Activated naive CD4-positive, alpha-beta T cell treated with anti-CD3 and anti-CD28 coated beads, Interleukin-2, amount 10 ng/mL, durations not matched to agents 7 days and 5 days (primary cell): ENCODE measurements at regions of chr5 and their contacts with region 1.

Region 1: DNA sequence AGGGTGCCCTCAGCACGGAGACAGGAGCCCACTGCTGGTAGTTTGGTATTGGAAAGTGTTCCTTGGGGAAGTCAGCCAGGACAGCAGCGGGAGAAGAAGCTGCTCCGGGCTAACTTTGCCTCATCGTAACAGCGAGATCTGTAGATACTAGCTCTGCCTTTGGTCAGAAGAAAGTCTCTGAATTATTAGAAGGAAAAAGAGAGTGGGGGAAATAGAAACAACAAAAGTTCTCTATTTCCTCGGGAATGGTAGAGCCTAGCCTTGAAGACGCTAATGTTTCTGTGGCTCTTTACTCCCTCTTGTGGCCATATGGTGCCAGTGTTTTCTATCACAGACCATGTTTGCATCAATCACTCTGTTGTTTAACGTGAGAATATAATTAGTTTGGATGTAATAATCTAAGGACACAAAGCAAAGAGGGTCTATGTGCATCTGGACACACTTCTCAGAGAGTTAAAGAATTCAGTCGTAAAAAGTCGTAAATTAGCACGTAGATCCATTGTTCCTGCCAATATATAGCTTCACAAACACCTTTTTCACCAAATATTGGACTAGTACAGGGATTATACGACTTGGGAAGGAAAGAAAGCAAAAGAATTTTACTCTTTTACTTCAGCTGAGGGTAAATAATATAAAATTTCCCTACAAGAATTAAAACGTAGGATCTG is 40.2 kb upstream of the HSD17B4 start:
- DNase-seq: peak; percentile 65
- H3K4me3 Mint-ChIP-seq: peak overlapping the region; percentile 71
- H3K27ac Mint-ChIP-seq: peak overlapping the region; percentile 44
- H3K4me1 Mint-ChIP-seq: peaks cover 29% of the 10 kb centered on the region
- H3K27me3 Mint-ChIP-seq: no peaks in the 10 kb centered on the region

Region 2: DNA sequence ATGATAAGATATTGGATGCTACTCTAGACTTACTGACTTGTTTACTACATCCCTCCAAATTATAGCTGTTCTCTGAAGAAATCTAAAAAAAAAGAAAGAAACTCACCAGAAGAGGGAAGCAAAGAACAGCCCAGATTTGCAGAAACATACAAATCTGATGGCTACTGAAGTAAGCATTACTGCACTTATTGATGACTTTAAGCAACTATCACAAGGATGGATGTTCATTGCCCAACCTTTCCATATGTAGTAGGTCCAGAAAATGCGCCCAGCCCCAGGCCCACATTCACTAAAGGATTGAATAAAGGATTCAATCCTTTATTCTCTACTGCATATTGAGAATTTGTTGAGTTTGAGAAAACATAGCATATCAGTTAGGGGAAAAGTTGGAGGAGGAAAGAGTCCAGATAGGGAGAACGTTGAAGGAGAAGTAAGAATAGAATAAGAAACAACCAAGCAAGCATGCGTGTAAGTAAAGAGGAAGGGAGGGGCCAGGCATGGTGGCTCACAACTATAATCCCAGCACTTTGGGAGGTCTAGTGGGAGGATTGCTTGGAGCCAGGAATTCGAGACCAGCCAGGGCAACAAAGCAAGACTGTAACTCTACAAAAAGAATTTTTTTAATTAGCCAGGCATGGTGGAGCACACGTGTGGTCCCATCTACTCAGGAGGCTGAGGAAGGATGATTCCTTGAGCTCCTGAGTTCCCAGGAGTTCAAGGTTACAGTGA is 389.9 kb before region 1 on chr5:
- CTCF ChIA-PET with region 1: interaction called, 56 read pairs
- DNase-seq: no peak
- H3K4me3 Mint-ChIP-seq: no peak overlapping the region
- H3K27ac Mint-ChIP-seq: no peak overlapping the region
- H3K4me1 Mint-ChIP-seq: no peaks in the 10 kb centered on the region
- H3K27me3 Mint-ChIP-seq: no peaks in the 10 kb centered on the region

Region 3: DNA sequence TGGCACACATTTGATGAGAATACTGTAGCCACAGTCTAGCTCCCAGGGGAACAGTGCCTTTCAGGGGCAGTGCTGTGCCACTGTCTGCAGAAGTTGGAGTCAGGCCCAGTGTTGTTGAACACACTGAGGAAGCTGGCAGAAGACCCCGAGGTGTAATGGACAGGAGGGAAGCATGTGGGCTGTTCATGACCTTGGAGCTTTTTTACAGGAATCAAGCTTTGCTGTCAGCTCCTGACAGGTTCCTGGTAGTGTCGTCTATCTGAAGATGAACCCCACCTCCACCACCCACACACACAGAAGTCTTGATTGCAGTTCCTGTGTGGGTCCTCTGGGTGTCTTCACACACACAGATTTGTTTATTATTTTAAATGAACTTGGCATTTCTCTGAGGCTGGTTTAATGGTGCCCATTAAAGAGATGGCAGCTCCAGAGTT is 96.5 kb before region 1 on chr5:
- CTCF ChIA-PET with region 1: interaction called, 70 read pairs
- DNase-seq: peak; percentile 67
- H3K4me3 Mint-ChIP-seq: peak overlapping the region; percentile 26
- H3K27ac Mint-ChIP-seq: peak overlapping the region; percentile 84
- H3K4me1 Mint-ChIP-seq: peaks cover 97% of the 10 kb centered on the region
- H3K27me3 Mint-ChIP-seq: no peaks in the 10 kb centered on the region

Region 4: DNA sequence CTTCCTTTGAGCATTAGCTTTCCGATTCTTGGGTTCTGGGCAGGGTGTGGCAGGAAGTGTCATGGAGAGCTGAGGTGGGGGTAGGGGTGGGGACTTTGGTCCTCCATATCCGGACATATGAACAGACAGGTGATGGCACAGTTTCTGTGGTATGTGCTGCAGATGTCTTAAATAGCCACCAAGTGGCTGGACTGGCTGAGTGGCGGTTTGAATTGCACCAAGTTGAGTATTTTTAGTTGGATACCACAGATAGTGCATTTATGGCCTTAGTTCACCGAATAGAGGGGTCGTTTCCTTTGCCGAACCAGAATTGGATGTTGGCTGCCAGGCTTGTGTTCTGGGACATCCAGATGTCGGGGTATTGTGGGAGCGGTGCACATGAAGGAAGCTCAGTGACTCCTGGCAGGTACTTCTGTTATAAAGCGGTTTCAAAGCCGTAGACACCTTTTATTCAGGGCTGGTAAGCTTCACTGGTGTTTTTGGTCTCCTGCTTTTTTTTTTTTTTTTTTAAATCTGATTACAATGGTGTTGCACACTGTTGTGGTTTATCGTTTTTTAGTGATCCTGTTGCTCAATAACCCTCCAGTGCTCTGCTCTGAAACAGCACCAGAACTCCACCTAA is 71.4 kb before region 1 on chr5:
- CTCF ChIA-PET with region 1: interaction called, 44 read pairs
- DNase-seq: peak; percentile 84
- H3K4me3 Mint-ChIP-seq: peak overlapping the region; percentile 82
- H3K27ac Mint-ChIP-seq: peak overlapping the region; percentile 92
- H3K4me1 Mint-ChIP-seq: peaks cover 95% of the 10 kb centered on the region
- H3K27me3 Mint-ChIP-seq: no peaks in the 10 kb centered on the region

Region 5: GRCh38 chr5:119355685-119356611 is 56.1 kb before region 1 on chr5 and contains the start of gene TNFAIP8:
- CTCF ChIA-PET with region 1: interaction called, 26 read pairs
- DNase-seq: peak; percentile 57
- H3K4me3 Mint-ChIP-seq: peak within 1 kb of the TSS; percentile 81
- H3K27ac Mint-ChIP-seq: peak within 1 kb of the TSS; percentile 88
- H3K4me1 Mint-ChIP-seq: peaks cover 93% of the 10 kb centered on the region
- H3K27me3 Mint-ChIP-seq: no peaks in the 10 kb centered on the region

Region 6: DNA sequence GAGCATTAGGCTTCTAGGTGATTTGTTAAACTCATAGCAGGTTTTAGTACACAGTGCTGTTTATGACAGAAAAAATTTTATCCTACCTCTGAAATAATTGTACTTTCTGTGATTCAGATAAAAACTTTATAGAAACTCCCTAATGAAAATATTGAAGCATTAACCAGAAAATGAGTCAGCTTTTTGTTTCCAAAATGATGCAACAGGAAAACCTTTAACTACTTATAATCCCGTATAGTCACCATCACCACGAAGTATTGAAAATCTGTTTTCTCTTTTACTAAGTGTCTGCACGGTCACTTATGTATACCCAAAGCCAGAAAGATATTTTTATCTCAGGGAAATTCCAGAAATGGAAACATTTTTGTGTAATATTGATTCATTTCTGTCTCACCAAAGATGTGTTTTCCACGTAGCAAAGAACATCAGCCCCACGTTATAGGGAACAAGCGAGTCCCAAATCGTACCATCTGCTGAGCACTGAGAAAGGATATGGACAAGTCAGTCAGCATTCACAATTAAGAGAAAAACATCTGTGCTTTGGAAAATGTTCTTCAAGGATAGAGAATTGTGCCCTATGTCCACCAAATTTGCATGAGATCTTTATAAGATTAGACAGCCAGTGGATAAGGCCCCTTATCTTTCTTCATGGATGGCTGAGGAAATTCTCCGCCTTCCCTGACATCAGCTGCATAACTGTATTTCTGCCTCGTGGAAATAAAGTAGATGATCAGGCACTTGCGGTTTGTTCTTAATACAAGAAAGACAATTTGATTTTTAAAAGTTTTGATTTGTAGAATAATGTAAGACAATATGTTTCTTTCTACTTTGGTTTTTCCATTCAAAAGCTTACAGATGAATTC is 14.3 kb before region 1 on chr5:
- CTCF ChIA-PET with region 1: interaction called, 11 read pairs
- DNase-seq: no peak
- H3K4me3 Mint-ChIP-seq: no peak overlapping the region
- H3K27ac Mint-ChIP-seq: peak overlapping the region; percentile 43
- H3K4me1 Mint-ChIP-seq: peaks cover 43% of the 10 kb centered on the region
- H3K27me3 Mint-ChIP-seq: no peaks in the 10 kb centered on the region

Region 7: DNA sequence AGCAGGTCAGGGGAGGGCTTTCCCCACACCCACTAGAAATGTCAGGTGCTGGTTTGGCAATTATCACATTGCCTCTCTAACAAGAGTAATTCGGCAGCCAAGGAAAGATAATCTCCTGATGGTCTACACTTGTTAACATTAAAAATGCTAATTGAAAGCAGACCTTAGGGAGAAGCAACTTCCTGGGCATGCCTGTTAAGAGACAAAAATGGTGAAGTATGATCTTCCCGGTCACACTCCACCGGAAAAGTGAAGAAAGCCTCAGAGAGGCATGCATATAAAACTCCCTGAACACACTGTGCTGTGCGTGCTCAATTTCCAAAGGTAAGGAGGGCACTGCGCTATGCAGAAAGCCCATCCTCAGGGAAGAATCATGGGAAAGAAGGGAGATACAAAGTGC is 461.5 kb after region 1 on chr5:
- CTCF ChIA-PET with region 1: no interaction called
- DNase-seq: no peak
- H3K4me3 Mint-ChIP-seq: no peak overlapping the region
- H3K27ac Mint-ChIP-seq: no peak overlapping the region
- H3K4me1 Mint-ChIP-seq: no peaks in the 10 kb centered on the region
- H3K27me3 Mint-ChIP-seq: no peaks in the 10 kb centered on the region